OCI-LY7 (cell line): ENCODE measurements at regions of chr6 and their contacts with region 1.

Region 1: DNA sequence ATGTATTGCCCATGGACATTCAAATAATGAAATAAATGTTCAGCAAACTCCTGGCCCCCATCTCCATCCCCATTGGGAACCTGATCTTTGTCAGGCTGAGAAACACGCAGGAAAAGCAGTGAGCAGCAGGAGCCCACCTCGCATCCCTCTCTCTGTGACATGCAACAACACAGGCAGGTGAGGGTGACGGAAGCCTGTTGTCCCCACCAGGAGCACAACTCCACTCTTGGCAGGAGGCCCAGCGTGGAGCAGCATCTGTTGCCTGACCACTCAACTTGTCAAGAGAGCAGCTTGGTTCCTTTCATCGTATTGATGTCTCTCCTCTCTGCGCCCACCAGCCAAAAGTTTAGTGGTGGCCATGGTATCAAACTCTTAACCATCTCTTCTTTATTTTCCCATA is 586.9 kb upstream of the ARID1B start:
- DNase-seq: no peak
- H3K4me3 ChIP-seq: no peak overlapping the region
- H3K27ac ChIP-seq: no peak overlapping the region
- H3K4me1 ChIP-seq: peaks cover 43% of the 10 kb centered on the region
- CTCF ChIP-seq: no peak

Region 2: DNA sequence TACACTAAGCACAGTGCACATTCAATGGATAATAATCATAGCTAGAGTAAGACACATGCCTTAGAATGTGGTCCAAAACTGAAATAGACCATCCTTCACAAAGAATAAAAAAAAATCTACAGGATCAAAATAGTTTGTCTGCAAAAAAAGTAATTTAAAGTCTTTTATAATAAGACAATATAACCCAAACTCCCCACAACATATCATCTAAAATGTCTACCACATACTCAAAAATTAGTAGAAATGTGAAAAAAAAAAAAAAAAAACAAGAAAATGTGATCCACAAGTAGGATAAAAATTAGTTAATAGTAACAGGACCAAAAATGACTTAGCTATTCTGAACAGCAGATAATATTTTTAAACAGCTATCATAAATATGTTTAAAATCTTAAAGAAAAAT is 29.7 kb after region 1 on chr6:
- CTCF ChIA-PET with region 1: no interaction called
- POLR2A ChIA-PET with region 1: no interaction called
- intact Hi-C with region 1: loop called (anchors 1 kb)
- DNase-seq: no peak
- H3K4me3 ChIP-seq: no peak overlapping the region
- H3K27ac ChIP-seq: no peak overlapping the region
- H3K4me1 ChIP-seq: no peaks in the 10 kb centered on the region
- CTCF ChIP-seq: no peak

Region 3: DNA sequence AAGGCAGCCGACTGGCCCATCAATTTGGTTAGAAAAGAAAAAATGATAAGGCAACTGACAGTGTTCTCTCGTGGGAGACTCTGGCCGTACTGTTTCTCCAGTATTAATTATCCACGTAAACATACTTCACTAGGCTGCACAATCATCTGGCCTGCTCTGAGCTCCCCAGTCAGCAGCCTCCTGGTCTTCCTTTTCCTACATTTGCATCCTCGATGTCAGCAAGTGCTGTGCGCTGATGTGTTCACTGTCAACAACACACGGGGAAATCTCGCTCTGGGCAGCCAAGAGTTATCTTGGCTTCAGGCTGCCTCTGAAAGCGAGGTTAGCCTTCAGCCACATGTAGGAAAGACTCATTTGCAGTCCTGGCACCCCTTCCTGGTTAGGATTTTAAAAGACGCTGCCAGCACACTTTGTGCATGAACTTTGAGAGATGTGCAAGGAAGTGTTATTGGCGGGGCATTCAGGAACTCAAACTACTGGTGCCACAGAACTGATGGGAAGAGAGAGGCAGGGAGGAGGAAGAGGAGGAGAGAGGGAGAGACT is 126.4 kb after region 1 on chr6:
- CTCF ChIA-PET with region 1: no interaction called
- POLR2A ChIA-PET with region 1: no interaction called
- intact Hi-C with region 1: no loop called
- DNase-seq: no peak
- H3K4me3 ChIP-seq: no peak overlapping the region
- H3K27ac ChIP-seq: no peak overlapping the region
- H3K4me1 ChIP-seq: no peaks in the 10 kb centered on the region
- CTCF ChIP-seq: no peak